Vagina (tissue), 2 donors: ENCODE measurements at regions of chr12 and their contacts with region 1.

Region 1: GRCh38 chr12:108856428-108857157 is 790 bp downstream of the SSH1 start:
- DNase-seq: peak in 1 of 2 donors; percentile 94
- H3K4me3 ChIP-seq: peak overlapping the region; percentile 88
- H3K27ac ChIP-seq: peak overlapping the region; percentile 91
- H3K4me1 ChIP-seq: peaks cover 45% of the 10 kb centered on the region
- H3K27me3 ChIP-seq: no peaks in the 10 kb centered on the region
- CTCF ChIP-seq: no peak
- POLR2A ChIP-seq: no peak

Region 2: DNA sequence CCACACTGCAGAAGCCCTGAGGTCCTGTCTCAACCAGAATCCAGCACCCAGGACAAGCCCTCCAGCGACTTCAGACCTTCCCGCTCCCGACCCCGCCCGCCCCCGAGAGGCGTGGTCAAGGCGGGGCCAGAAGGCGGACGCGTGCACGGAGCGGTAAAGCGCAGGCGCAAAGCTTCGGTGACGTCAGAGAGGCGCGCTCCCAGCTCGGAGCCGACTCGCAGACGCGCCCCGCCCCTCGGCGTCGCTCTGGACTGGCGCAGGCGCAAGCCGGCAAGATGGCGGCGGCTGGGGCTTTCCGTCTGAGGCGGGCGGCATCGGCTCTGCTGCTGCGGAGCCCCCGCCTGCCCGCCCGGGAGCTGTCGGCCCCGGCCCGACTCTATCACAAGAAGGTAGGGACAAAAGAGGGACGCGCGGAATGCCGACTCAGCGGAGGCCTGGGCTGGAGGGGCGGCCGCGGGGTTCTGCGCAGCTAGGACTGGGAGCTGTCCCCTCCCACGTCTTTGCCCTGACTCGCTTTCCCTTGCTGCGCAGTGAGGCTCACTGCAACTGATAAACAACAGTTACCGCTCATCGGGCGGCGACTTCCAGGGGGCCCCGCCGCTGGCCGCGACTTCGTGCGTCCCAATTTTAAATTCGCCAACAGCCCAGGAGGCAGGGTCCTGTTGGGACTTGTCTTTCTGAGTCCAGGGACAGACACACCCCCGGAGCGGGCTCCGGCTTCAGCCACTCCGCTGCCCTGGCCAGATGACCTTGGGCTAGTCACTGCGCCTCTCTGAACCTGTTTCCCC is 294.1 kb before region 1 on chr12 and contains the start of gene ISCU:
- intact Hi-C with region 1: loop called (anchors 10 kb)
- DNase-seq: peak; percentile 97 to 98
- H3K4me3 ChIP-seq: peak within 1 kb of the TSS; percentile 64 to 94
- H3K27ac ChIP-seq: peak within 1 kb of the TSS; percentile 94
- H3K4me1 ChIP-seq: peaks cover 67% of the 10 kb centered on the region
- H3K27me3 ChIP-seq: no peaks in the 10 kb centered on the region
- CTCF ChIP-seq: no peak
- POLR2A ChIP-seq: peak in 1 of 2 donors; percentile 91
- total RNA-seq, gene ISCU: 167 TPM

Region 3: DNA sequence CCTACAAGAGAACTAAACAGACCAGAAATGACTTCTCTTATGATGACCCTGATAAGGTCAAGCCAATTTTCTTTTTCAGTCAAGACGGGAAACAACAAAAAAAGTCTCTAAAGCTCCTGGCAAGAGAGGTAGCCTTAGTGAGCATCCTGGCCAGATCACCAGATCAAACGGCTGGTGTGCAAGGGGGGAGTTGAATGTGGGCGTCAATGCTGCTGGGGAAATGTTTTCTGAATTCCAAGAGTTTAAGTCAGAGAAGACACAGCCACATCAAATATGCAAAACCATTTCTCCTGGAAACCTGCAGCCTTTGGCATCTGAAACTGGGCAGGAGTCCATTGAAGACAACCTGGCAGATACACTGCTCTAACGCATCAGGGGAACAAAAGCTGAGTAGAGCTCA is 206.9 kb before region 1 on chr12:
- intact Hi-C with region 1: no loop called
- DNase-seq: no peak
- H3K4me3 ChIP-seq: no peak overlapping the region
- H3K27ac ChIP-seq: no peak overlapping the region
- H3K4me1 ChIP-seq: no peaks in the 10 kb centered on the region
- H3K27me3 ChIP-seq: no peaks in the 10 kb centered on the region
- CTCF ChIP-seq: no peak
- POLR2A ChIP-seq: no peak

Region 4: GRCh38 chr12:108664338-108665258 is 192.0 kb before region 1 on chr12:
- intact Hi-C with region 1: loop called (anchors 10 kb)
- DNase-seq: no peak
- H3K4me3 ChIP-seq: no peak overlapping the region
- H3K27ac ChIP-seq: peak overlapping the region; percentile 89
- H3K4me1 ChIP-seq: peaks cover 58% of the 10 kb centered on the region
- H3K27me3 ChIP-seq: no peaks in the 10 kb centered on the region
- CTCF ChIP-seq: peak; percentile 75 to 98 (median 87)
- POLR2A ChIP-seq: no peak

Region 5: DNA sequence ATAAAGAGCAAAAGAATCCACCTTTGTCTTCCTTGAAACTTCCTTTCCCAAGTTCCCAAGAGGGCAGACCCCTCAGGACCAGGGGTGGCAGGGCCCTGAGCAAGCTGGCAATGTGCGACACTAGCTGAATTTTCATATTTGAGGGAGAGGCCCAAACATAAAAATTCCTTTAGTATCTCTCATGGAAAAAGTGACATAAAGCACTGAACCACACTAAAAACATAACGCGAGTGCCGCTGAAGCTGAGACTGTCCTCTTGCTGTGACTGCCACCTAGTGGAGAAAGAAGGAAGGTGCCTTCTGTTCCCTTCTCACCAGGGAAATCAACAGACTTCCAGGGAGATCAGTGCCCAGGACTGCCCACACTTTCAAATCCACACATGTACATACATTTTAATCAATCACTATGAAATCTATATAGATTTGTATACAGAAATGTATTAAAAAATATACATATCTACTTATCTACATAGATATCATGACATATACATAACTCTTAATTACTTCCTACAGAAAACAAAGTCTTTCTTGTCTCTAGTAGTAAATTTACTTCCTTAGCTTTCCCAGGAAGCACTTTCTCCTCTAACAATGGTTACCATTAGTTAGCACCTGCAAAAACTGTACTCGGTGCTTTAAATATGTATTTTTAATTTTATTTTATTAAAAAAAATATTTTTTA is 53.0 kb before region 1 on chr12:
- intact Hi-C with region 1: loop called (anchors 10 kb)
- DNase-seq: no peak
- H3K4me3 ChIP-seq: no peak overlapping the region
- H3K27ac ChIP-seq: peak overlapping the region; percentile 89
- H3K4me1 ChIP-seq: peaks cover 48% of the 10 kb centered on the region
- H3K27me3 ChIP-seq: no peaks in the 10 kb centered on the region
- CTCF ChIP-seq: peak; percentile 88 to 98 (median 97)
- POLR2A ChIP-seq: no peak

Region 6: GRCh38 chr12:108816652-108817335 is 39.8 kb before region 1 on chr12:
- intact Hi-C with region 1: no loop called
- DNase-seq: no peak
- H3K4me3 ChIP-seq: no peak overlapping the region
- H3K27ac ChIP-seq: peak overlapping the region; percentile 45
- H3K4me1 ChIP-seq: peaks cover 33% of the 10 kb centered on the region
- H3K27me3 ChIP-seq: no peaks in the 10 kb centered on the region
- CTCF ChIP-seq: no peak
- POLR2A ChIP-seq: no peak

Region 7: DNA sequence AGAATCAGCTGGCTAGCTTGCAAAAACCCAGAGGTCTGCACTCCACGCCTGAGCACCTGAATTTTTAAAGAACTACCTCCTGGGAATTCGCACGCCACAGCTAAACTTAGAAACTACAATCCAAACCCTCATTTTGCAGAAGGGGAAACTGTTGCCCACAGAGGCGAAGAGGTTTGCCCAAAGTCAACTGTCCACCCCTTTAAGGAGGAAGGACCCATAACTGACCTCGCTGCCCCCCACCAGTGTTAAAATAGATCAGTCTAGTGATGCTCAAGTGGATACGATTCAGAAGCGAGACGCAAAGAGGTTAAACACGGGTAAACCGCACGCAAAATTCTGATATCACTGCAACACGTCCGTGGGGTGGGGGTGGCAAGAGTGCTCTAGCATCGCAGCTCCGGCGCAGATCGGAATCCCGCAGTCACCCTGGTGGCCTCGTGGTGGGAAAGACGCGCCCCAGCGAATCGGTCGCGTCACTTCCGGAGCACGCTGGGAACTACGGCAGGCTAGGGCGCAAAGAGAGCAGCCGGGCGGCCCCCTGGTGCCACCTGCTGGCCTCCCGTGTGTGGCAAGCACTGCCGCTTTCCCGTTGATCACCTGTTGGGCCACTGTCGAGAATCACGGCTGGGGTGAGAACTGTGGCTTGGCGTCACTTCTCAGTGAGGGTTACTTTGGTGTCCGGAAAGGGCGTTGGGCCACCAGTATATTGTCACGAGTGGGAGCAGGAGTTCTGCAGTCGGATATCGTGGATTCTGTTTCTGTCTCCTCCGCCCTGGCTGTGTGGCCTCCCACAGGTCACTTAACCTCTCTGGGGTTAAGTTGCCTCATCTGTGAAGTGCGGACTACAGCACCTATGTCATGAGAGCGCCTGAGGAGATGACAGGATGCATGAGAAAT is 236.7 kb after region 1 on chr12 and contains the start of gene ALKBH2:
- intact Hi-C with region 1: loop called (anchors 10 kb)
- DNase-seq: peak in 1 of 2 donors; percentile 93
- H3K4me3 ChIP-seq: peak within 1 kb of the TSS; percentile 58 to 60
- H3K27ac ChIP-seq: peak within 1 kb of the TSS; percentile 69
- H3K4me1 ChIP-seq: peaks cover 35% of the 10 kb centered on the region
- H3K27me3 ChIP-seq: no peaks in the 10 kb centered on the region
- CTCF ChIP-seq: peak; percentile 84 to 98 (median 98)
- POLR2A ChIP-seq: no peak
- total RNA-seq, gene ALKBH2: 14.5 TPM